Posterior vena cava (tissue), 2 donors: ENCODE measurements at regions of chr2 and their contacts with region 1.

Region 1: DNA sequence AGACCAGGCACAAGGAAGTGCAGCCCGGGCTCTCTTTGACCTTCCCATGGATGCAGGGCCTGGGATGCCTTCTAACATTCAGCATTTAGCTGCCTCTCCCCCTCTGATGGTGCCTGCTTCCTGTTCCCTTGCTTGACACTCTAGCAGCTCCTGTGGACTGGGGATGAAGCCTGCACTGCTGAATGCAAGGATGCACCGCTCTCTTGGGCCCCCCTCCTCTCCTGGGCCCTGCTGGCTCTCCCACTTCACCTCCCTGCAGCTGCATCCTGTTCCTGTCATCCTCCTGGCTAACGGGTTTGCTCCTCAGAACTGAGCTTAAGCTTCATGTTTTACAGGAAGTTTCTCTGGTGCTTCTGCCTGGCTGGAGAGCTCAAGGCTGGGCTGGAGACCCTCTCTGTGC is 254.1 kb downstream of the TSN start:
- DNase-seq: no peak

Region 2: DNA sequence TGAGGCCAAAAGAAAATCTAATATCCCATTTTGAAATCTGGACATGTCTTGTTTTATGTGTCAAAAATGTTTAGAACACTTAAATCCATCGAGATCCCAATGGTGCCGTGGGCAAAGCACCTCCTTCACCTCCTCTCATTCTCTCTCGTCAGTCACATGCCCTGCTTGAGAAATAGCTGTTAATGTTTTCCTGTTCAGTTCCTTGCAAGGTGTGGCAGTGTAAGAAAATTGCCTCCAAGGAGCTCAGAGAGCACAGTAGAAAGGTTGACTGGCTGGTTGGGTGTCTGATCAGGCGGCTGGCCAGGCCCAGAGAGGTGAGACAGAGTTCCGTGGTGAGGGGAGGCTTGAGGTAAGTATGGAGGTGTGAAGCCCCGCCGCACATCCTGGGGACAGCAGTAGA is 43.9 kb before region 1 on chr2:
- intact Hi-C with region 1: loop called in 1 of 2 experiments (anchors 2 kb)
- DNase-seq: no peak

Region 3: DNA sequence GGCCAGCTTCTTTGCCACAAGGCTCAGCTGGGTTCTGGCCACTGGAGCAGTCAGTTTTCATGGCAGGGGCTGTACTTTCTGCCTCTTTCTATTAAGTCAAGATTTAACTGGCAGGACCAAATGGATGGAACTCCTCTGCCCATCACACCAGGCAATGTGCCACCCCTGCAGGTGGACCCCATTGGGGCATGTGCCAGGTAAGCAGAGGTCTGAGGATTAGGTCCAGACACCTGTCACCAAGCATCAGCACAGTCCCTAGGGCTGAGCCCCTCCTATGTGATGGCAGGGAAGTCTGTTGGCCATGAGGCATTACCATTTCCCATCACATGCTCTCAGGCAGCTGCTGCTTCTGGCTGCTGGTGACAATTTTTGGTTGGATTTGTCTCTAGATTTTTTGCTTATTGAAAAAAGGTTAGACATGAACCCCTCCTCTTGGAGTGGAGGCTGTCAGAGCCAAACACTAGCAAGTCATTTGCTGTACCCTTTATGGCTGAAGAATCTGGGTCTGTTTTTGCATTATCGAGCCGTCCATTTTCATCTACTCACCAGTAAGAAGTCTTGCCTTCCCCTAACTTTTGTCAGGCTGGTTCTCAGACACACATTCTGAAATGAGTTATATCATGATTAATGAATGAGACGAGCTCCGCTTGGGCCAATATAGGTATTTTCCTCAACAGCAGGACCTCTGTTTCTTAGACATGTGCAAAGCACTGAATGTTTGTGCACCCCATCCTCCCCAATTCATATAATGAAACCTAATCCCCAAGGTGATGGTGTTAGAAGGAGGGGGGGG is 73.9 kb after region 1 on chr2:
- intact Hi-C with region 1: no loop called
- DNase-seq: no peak